ENCODE measurements at regions of chr6 and their contacts with region 1.

Region 1: GRCh38 chr6:72769459-72770125 is 147.7 kb downstream of the KCNQ5 start:
- DNase-seq: peak; percentile 64
- H3K4me3 ChIP-seq: peak overlapping the region; percentile 17
- H3K27ac ChIP-seq: peak overlapping the region; percentile 67
- H3K4me1 ChIP-seq: peaks cover 31% of the 10 kb centered on the region
- CTCF ChIP-seq: no peak

Region 2: GRCh38 chr6:72783666-72784065 is 14.1 kb after region 1 on chr6:
- CTCF ChIA-PET with region 1: no interaction called
- POLR2A ChIA-PET with region 1: interaction called, 10 read pairs
- intact Hi-C with region 1: no loop called
- DNase-seq: no peak
- H3K4me3 ChIP-seq: no peak overlapping the region
- H3K27ac ChIP-seq: no peak overlapping the region
- H3K4me1 ChIP-seq: no peaks in the 10 kb centered on the region
- CTCF ChIP-seq: no peak

Region 3: DNA sequence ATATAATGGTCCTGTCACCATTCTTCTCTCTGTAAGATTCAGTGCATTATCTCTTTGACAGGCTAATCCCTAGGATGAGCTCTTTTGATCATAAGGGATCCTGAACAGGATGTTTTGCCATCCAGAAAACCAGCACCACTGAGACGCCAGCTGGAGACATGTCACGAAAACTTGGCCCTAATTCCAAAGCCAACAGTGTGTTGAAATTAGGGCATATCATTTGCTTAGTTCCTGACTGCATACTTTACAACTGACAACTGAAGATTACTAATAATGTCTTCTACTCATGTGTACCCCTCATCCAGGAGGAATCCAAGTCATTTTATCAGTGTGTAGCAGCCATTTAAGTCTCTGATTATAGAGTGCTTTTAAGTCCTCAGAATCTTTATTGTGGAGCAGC is 95.9 kb after region 1 on chr6:
- CTCF ChIA-PET with region 1: no interaction called
- POLR2A ChIA-PET with region 1: no interaction called
- intact Hi-C with region 1: no loop called
- DNase-seq: no peak
- H3K4me3 ChIP-seq: no peak overlapping the region
- H3K27ac ChIP-seq: no peak overlapping the region
- H3K4me1 ChIP-seq: no peaks in the 10 kb centered on the region
- CTCF ChIP-seq: no peak

Region 4: GRCh38 chr6:73732845-73733675 is 963.5 kb after region 1 on chr6:
- CTCF ChIA-PET with region 1: no interaction called
- POLR2A ChIA-PET with region 1: no interaction called
- intact Hi-C with region 1: no loop called
- DNase-seq: peak; percentile 70
- H3K4me3 ChIP-seq: no peak overlapping the region
- H3K27ac ChIP-seq: no peak overlapping the region
- H3K4me1 ChIP-seq: no peaks in the 10 kb centered on the region
- CTCF ChIP-seq: peak; percentile 94

Measured in OCI-LY7 (cell line).